Ascending aorta (tissue), 2 donors: ENCODE measurements at regions of chr3 and their contacts with region 1.

Region 1: GRCh38 chr3:182980204-182981037 is at the start of gene DCUN1D1:
- DNase-seq: peak; percentile 56 to 95
- H3K4me3 ChIP-seq: peak within 1 kb of the TSS; percentile 96 to 100
- H3K27ac ChIP-seq: peak within 1 kb of the TSS; percentile 84 to 89
- H3K4me1 ChIP-seq: peaks cover 3 to 11% of the 10 kb centered on the region in 2 donors
- H3K27me3 ChIP-seq: no peaks in the 10 kb centered on the region
- CTCF ChIP-seq: no peak
- total RNA-seq, gene DCUN1D1: 8.4 TPM

Region 2: DNA sequence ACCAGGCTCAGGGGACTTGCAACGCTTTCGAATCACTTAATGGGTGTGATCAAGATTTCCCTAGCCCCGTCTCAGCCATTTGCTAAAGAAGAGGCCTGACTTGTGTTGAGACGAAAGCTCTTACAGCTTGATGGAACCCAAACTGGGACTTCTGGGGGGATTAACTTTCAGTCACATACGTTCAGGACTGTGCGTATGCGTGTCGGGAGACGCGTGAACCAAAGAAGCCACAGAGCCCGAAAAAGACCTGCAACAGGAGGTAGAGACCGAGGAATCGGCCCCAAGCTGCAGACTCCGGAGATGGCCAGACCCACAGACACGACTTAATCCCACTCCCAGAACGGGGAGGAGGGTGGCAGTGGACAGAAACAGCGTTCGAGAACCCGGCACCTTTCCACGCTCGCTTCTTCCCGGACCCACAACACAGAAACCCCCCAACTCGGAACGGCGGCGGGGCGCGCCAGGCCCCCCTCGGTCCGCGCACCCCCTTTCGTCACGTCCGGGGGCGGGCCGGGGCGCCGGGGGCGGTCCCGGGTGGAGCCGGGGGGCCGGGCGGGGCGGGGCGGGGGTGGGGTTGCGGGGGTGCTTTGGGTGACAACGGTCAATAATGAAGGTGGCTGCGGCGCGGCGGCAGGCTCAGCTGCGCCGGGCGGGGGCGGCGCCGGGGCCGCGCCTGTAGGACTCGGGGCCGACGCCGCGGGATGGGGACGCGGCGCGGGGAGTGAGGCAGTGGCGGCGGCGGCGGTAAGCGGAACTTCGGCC is 187.3 kb before region 1 on chr3 and contains the start of gene ATP11B:
- intact Hi-C with region 1: loop called (anchors 5 kb)
- DNase-seq: peak; percentile 23 to 83
- H3K4me3 ChIP-seq: peak within 1 kb of the TSS; percentile 74 to 89
- H3K27ac ChIP-seq: peak within 1 kb of the TSS; percentile 85 to 96
- H3K4me1 ChIP-seq: peaks cover 0 to 18% of the 10 kb centered on the region in 2 donors
- H3K27me3 ChIP-seq: no peaks in the 10 kb centered on the region
- CTCF ChIP-seq: no peak
- total RNA-seq, gene ATP11B: 117 TPM